ENCODE measurements at regions of chr2 and their contacts with region 1.

Region 1: DNA sequence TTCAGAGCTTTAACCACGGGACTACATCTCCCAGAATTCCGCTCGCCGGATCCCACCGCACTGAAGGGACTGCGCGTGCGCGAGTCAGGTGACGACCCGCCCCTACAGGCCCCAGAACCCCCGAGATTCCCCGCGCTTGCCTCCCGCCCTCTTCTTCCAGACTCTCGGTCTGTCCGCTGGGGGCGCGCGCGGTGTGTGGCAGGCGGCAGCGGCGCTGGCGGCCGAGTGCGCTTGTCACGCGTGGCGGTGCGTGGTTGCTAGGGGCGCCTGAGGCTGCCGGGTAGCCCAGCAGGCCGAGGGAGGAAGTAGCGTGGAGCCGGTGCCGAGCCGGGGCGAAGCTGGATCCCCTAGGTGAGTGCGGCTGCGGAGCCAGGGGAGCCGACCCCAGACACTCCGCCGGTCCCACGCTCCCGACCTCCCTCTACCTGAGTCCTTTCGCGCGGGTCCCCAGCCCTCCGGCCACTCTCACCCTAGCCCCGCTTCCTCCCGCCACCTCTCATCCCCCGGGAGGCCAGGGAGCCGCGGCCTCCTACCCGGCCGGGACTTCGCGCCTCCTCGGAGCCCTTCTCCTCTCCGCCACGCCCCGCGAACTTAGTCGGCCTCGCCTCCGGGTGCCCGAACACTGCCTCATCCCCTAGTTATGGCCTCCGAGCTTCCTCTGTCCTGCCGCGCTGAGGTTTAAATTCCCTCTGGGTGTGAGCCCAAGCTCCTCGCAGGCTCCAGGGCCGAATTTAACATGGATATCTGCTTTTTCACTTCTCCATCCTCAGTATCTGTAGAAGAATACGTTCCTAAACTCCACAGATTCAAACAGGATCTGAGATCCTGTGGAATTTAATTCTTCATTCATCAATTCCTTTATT is at the start of gene TTLL4:
- DNase-seq: peak; percentile 93 to 99
- H3K4me3 ChIP-seq: peak within 1 kb of the TSS; percentile 81 to 90
- H3K27ac ChIP-seq: peak within 1 kb of the TSS; percentile 87 to 95
- H3K4me1 ChIP-seq: peaks cover 0 to 7% of the 10 kb centered on the region in 2 donors
- H3K27me3 ChIP-seq: no peaks in the 10 kb centered on the region
- CTCF ChIP-seq: peak; percentile 93 to 98 (median 96)
- total RNA-seq, gene TTLL4: 93.4 TPM

Region 2: GRCh38 chr2:218557941-218558340 is 153.0 kb before region 1 on chr2:
- intact Hi-C with region 1: no loop called
- DNase-seq: no peak
- H3K4me3 ChIP-seq: no peak overlapping the region
- H3K27ac ChIP-seq: no peak overlapping the region
- H3K4me1 ChIP-seq: no peaks in the 10 kb centered on the region
- H3K27me3 ChIP-seq: no peaks in the 10 kb centered on the region
- CTCF ChIP-seq: no peak

Region 3: GRCh38 chr2:218568190-218569037 is 142.5 kb before region 1 on chr2 and contains the starts of genes CNOT9 and USP37:
- intact Hi-C with region 1: loop called (anchors 2 kb)
- DNase-seq: peak; percentile 96 to 100
- H3K4me3 ChIP-seq: peak within 1 kb of the TSS; percentile 75 to 89
- H3K27ac ChIP-seq: peak within 1 kb of the TSS; percentile 91 to 95
- H3K4me1 ChIP-seq: peaks cover 5 to 26% of the 10 kb centered on the region in 2 donors
- H3K27me3 ChIP-seq: no peaks in the 10 kb centered on the region
- CTCF ChIP-seq: no peak
- total RNA-seq, gene CNOT9: 46.7 TPM
- total RNA-seq, gene USP37: 11.8 TPM

Region 4: GRCh38 chr2:218806346-218806978 is 95.5 kb after region 1 on chr2:
- intact Hi-C with region 1: loop called (anchors 1 kb)
- DNase-seq: peak; percentile 75 to 95
- H3K4me3 ChIP-seq: peak overlapping the region; percentile 22 to 31
- H3K27ac ChIP-seq: peak overlapping the region; percentile 68 to 88
- H3K4me1 ChIP-seq: peaks cover 4 to 23% of the 10 kb centered on the region in 2 donors
- H3K27me3 ChIP-seq: no peaks in the 10 kb centered on the region
- CTCF ChIP-seq: no peak

Region 5: DNA sequence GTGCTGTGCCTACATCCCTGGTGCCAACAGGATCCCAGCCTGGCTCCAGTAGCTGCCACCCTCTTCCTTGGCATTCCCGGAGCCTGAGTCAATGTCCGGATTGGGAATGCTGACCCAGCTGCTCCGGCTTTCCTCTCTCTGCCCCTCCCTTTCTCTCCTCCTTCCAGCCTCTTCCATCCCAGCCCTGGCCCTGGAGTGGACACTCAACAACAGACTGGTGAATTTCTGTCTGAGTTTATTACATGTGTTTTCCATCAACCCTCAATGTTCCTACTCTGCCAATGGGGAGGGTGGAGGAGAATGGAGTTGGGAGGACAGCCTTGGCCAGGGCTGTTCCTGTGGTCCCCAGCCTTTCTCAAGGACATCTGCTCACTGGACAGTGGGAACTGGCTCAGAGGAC is 121.6 kb after region 1 on chr2:
- intact Hi-C with region 1: loop called (anchors 5 kb)
- DNase-seq: peak; percentile 39 to 87
- H3K4me3 ChIP-seq: no peak overlapping the region
- H3K27ac ChIP-seq: peak overlapping the region; percentile 80 to 83
- H3K4me1 ChIP-seq: peaks cover 8 to 29% of the 10 kb centered on the region in 2 donors
- H3K27me3 ChIP-seq: no peaks in the 10 kb centered on the region
- CTCF ChIP-seq: no peak

Region 6: DNA sequence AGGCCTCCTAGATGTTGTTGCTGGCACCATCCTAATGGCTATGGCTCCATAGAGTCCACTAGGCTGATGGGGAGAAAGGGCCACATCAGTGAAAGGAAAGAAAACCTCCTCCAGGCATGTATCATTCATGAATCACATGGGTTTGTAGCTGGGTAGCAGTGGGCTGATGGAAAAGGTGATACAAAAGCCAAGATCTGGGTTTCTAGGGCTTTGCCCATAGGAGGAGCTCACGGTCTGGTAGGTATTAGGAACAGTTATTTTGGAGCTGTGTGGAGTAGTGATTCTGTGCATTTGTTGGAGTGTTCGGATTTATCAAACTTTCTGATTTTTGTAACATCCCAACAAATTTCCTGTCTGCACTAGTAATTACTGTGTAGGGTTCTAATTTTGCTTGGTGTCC is 1175.7 kb after region 1 on chr2:
- intact Hi-C with region 1: no loop called
- DNase-seq: no peak
- H3K4me3 ChIP-seq: no peak overlapping the region
- H3K27ac ChIP-seq: no peak overlapping the region
- H3K4me1 ChIP-seq: no peaks in the 10 kb centered on the region
- H3K27me3 ChIP-seq: no peaks in the 10 kb centered on the region
- CTCF ChIP-seq: no peak

Measured in ascending aorta (tissue), 2 donors.